GM23248 (cell line): ENCODE measurements at regions of chr20 and their contacts with region 1.

Region 1: GRCh38 chr20:354298-355064 is 7.6 kb downstream of the NRSN2 start:
- DNase-seq: peak; percentile 79
- H3K4me3 ChIP-seq: no peak overlapping the region
- H3K27ac ChIP-seq: no peak overlapping the region
- H3K4me1 ChIP-seq: peaks cover 7% of the 10 kb centered on the region
- H3K27me3 ChIP-seq: no peaks in the 10 kb centered on the region

Region 2: DNA sequence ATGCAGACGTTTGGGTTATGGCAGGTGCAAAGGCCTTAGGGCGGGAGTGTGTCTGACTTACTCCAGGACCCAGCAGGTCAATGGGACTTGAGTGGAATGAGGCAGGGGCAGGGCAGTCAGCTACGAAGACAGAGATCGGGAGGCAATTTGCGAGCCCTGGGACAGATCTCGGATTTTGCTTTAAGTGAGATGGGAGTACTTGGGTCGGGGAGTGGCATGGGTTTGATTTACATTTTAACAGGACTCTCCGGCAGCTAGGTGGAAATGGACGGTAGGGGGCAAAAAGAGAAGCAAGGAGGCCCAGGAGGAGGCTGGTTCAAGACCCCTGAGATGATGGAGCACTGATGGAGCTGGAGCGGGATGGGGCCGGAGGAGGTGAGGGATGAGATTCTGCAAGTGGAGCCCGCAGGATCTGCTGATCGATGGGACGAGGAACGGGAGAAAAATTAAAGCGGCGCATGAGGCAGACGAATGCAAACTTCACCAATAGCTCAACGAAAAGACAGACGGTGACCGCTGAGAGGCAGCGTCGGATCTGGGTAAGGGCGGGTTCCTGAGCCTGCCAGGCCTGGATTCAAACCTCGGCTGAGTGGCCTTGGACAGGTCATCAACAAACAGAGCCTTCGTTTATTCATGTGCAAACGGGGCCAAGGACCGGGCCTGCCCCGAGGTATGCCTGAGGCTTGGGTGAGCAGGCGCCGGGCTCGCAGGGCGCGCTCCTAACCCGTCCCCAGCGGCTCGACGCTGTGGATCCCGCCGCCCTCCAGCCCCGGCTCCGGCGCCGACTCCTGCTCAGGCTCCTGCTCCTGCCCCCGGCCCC is 52.9 kb after region 1 on chr20:
- in situ Hi-C with region 1: no loop called
- DNase-seq: peak; percentile 88
- H3K4me3 ChIP-seq: peak overlapping the region; percentile 75
- H3K27ac ChIP-seq: peak overlapping the region; percentile 65
- H3K4me1 ChIP-seq: peaks cover 20% of the 10 kb centered on the region
- H3K27me3 ChIP-seq: no peaks in the 10 kb centered on the region

Region 3: DNA sequence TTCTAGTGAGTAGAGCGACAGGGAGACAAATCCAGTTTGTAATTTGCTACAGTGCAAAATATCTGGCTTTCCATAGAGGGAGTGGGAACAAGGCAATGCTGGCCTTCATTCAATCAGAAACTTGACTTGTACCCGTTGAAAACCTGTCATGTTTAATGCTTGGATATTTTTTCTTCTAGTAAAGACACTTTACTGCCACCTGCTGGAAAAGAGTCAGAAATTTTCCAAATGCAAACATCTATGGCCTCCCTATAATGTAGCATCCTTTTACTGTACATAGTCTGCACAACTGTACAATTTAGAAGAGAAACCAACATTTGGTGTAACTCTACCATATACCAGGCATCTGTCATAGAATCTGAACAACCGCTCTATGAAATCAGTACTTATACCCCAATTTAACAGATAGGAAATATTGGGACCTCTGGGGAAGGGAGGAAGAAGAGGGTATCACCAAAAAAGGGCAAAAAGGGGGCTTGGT is 124.5 kb after region 1 on chr20:
- in situ Hi-C with region 1: loop called (anchors 5 kb)
- DNase-seq: peak; percentile 74
- H3K4me3 ChIP-seq: no peak overlapping the region
- H3K27ac ChIP-seq: peak overlapping the region; percentile 48
- H3K4me1 ChIP-seq: peaks cover 17% of the 10 kb centered on the region
- H3K27me3 ChIP-seq: no peaks in the 10 kb centered on the region

Region 4: DNA sequence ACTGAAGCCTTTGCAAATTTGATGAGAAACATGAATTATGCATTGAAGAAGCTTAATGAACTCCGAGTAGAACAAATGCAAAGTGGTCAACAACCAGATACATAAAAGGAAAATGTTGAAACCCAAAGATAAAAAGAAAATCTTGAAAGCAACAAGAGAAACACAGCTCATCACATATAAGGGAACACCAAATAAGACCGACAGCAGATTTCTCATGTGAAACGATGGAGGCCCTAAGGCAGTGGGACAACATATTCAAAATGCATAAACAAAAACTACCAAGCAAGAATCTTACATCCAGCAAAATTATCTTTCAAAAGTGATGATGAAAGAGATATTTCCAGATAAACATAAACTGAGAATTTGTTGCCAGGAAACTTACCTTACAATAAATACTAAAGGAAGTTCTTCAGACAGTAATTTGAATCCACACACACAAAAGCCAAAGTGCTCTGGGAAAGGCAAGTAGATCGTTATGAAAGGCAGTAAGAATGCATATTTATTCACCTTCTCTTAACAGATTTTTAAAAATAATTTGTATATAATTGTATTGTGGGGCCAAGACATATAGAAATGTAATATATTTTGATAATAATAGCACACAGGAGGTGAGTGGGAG is 391.3 kb after region 1 on chr20:
- in situ Hi-C with region 1: loop called (anchors 10 kb)
- DNase-seq: peak; percentile 36
- H3K4me3 ChIP-seq: no peak overlapping the region
- H3K27ac ChIP-seq: no peak overlapping the region
- H3K4me1 ChIP-seq: no peaks in the 10 kb centered on the region
- H3K27me3 ChIP-seq: 0 out of 2 replicates have a peak, but pooled peaks cover 5% of the 10 kb centered on the region

Region 5: GRCh38 chr20:1600736-1601135 is 1246.3 kb after region 1 on chr20:
- in situ Hi-C with region 1: no loop called
- DNase-seq: no peak
- H3K4me3 ChIP-seq: no peak overlapping the region
- H3K27ac ChIP-seq: no peak overlapping the region
- H3K4me1 ChIP-seq: no peaks in the 10 kb centered on the region
- H3K27me3 ChIP-seq: no peaks in the 10 kb centered on the region